Activated CD8-positive, alpha-beta T cell treated with anti-CD3 and anti-CD28 coated beads for 36 hours (primary cell): ENCODE measurements at regions of chr6 and their contacts with region 1.

Region 1: DNA sequence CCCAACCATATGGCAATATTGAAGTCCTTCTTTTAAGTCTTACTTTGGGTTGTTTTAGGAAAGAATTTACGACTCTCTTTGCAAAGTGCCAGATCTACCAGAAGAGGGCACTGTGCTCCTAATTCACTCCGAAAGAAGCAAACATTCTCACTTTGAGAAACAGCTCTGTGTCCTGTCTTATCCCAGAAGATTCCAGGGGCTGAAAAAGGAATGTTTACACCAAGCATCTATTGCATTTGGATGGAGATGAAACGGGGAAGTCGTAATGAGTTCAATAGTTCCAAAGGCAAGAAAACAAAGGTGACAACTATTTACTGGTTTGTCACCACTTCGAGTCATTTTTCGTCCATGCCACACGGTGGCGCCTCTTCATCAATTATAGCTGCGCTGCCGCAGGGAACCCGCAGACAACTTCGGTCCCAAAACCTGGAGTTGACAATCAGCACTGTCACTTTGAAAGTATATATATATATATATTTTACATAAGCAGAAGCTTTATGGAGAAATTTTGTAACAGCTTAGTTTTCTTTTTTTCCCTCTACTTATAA is 121.6 kb downstream of the MOXD1 start:
- DNase-seq: peak; percentile 79
- ATAC-seq: peak; percentile 88
- H3K4me3 Mint-ChIP-seq: peak overlapping the region; percentile 64
- H3K27ac Mint-ChIP-seq: no peak overlapping the region
- H3K4me1 Mint-ChIP-seq: no peaks in the 10 kb centered on the region
- H3K27me3 Mint-ChIP-seq: peaks cover 23% of the 10 kb centered on the region
- CTCF ChIP-seq: peak; percentile 98

Region 2: DNA sequence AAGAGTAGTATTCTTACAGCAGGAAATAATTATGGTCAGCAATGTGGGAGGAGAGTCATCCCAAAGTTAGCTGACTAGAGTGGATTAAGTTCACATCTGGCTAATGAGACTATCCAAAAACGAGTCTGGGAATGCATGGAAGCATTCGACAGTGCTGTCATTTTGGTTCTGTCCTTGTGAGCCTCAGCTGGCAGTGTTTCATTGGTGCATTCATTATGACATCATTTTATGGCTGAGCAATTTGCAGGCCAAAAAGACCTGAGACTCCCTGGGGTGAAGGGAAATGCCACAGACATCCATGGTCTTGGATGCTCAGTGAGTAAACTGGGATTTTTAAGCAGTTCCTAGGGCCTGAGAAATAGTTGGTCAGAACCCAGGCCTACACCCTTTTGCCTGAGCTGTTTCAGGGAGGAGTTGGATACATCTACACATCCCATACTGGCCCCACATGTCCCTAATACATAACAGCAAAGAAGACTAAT is 132.1 kb before region 1 on chr6:
- CTCF ChIA-PET with region 1: no interaction called
- POLR2A ChIA-PET with region 1: no interaction called
- intact Hi-C with region 1: no loop called
- DNase-seq: no peak
- ATAC-seq: no peak
- H3K4me3 Mint-ChIP-seq: no peak overlapping the region
- H3K27ac Mint-ChIP-seq: no peak overlapping the region
- H3K4me1 Mint-ChIP-seq: no peaks in the 10 kb centered on the region
- H3K27me3 Mint-ChIP-seq: no peaks in the 10 kb centered on the region
- CTCF ChIP-seq: no peak

Region 3: GRCh38 chr6:132259070-132259469 is 20.6 kb before region 1 on chr6:
- CTCF ChIA-PET with region 1: interaction called, 37 read pairs
- POLR2A ChIA-PET with region 1: no interaction called
- intact Hi-C with region 1: no loop called
- DNase-seq: no peak
- ATAC-seq: no peak
- H3K4me3 Mint-ChIP-seq: no peak overlapping the region
- H3K27ac Mint-ChIP-seq: no peak overlapping the region
- H3K4me1 Mint-ChIP-seq: no peaks in the 10 kb centered on the region
- H3K27me3 Mint-ChIP-seq: peaks cover 22% of the 10 kb centered on the region
- CTCF ChIP-seq: no peak

Region 4: DNA sequence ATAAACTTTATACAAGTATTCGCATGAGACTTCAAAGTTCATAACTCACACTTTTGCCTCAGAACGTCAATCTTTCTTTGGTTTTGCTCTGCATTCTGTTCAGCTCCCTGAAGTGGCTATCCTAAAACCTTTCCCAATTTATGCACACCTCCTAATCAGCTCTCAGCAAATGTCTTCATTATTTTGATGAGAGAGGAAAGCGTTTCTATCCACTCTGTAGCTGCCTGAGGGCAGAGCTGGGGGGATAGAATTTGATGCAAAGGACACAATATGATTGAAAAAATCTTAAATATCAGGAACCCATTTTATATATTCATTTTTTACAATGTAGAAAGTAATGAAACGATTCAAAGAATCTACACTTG is 54.8 kb after region 1 on chr6:
- CTCF ChIA-PET with region 1: interaction called, 10 read pairs
- POLR2A ChIA-PET with region 1: no interaction called
- intact Hi-C with region 1: no loop called
- DNase-seq: no peak
- ATAC-seq: no peak
- H3K4me3 Mint-ChIP-seq: no peak overlapping the region
- H3K27ac Mint-ChIP-seq: no peak overlapping the region
- H3K4me1 Mint-ChIP-seq: no peaks in the 10 kb centered on the region
- H3K27me3 Mint-ChIP-seq: peaks cover 9% of the 10 kb centered on the region
- CTCF ChIP-seq: no peak

Region 5: DNA sequence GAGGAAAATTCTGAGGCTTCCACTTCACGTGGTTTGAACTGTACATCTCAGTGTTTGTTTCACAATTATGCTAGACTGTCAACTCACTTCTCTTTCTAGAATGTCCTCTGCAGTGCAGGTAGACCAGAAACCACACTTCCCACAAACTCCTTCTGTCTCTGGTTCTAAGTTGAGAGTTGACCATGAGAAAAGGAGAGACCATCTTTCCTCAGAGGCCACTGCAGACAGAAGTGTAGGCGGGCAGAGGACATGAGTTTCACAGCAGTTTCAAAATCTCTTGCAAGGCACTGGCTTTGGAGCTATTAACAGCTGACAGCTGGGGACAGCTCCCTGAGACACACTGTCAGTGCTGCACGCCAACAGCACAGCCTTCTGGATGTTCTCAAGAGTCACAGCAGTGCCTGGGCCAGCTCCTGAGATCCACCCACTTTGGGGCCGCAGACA is 177.1 kb after region 1 on chr6:
- CTCF ChIA-PET with region 1: interaction called, 11 read pairs
- POLR2A ChIA-PET with region 1: no interaction called
- intact Hi-C with region 1: no loop called
- DNase-seq: peak; percentile 6
- ATAC-seq: no peak
- H3K4me3 Mint-ChIP-seq: no peak overlapping the region
- H3K27ac Mint-ChIP-seq: no peak overlapping the region
- H3K4me1 Mint-ChIP-seq: peaks cover 4% of the 10 kb centered on the region
- H3K27me3 Mint-ChIP-seq: no peaks in the 10 kb centered on the region
- CTCF ChIP-seq: no peak

Region 6: GRCh38 chr6:132483779-132484679 is 204.4 kb after region 1 on chr6:
- CTCF ChIA-PET with region 1: interaction called, 276 read pairs
- POLR2A ChIA-PET with region 1: no interaction called
- intact Hi-C with region 1: loop called (anchors 1 kb)
- DNase-seq: peak; percentile 59
- ATAC-seq: peak; percentile 67
- H3K4me3 Mint-ChIP-seq: no peak overlapping the region
- H3K27ac Mint-ChIP-seq: no peak overlapping the region
- H3K4me1 Mint-ChIP-seq: peaks cover 12% of the 10 kb centered on the region
- H3K27me3 Mint-ChIP-seq: no peaks in the 10 kb centered on the region
- CTCF ChIP-seq: peak; percentile 81

Region 7: DNA sequence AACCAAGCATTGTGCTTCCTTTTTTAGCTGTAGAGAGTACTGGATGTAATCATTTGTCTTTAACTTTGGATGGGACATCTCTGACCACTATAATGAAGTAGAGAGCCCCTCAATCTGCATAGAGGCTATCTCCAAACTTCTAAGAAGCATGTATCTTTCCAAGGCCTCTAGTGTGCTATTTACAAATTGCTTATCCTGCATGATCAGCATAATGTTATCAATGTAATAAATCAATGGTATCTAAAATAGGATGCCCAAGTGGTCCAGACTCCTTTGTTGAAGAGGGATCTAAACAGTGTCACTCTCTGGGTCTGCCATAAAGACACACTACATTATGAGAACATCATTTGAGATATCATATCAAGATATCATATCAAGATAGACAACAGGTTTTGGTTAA is 265.2 kb after region 1 on chr6:
- CTCF ChIA-PET with region 1: interaction called, 10 read pairs
- POLR2A ChIA-PET with region 1: no interaction called
- intact Hi-C with region 1: no loop called
- DNase-seq: no peak
- ATAC-seq: no peak
- H3K4me3 Mint-ChIP-seq: no peak overlapping the region
- H3K27ac Mint-ChIP-seq: no peak overlapping the region
- H3K4me1 Mint-ChIP-seq: no peaks in the 10 kb centered on the region
- H3K27me3 Mint-ChIP-seq: peaks cover 14% of the 10 kb centered on the region
- CTCF ChIP-seq: no peak